OCI-LY7 (cell line): ENCODE measurements at regions of chr11 and their contacts with region 1.

Region 1: DNA sequence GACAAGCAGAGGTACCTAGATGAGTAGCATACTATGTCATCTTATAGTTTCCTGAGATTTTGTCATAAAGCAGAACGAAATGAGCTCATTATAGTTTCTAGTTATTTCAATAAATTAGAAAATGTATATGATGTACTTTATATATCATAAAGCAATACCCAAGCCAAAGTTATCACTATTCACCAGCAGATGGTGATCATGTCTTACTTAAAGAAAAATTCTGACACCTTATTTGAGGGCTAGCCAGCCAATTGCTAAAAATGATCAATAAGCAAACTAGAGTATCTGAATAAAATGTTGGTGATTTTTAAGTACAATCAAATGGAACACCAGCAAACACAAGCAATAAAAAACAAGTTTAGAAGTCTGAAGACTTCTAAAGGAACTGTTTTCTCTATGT is 44.1 kb downstream of the RSF1 start:
- DNase-seq: peak; percentile 32
- H3K4me3 ChIP-seq: no peak overlapping the region
- H3K27ac ChIP-seq: no peak overlapping the region
- H3K4me1 ChIP-seq: no peaks in the 10 kb centered on the region
- CTCF ChIP-seq: peak; percentile 78

Region 2: DNA sequence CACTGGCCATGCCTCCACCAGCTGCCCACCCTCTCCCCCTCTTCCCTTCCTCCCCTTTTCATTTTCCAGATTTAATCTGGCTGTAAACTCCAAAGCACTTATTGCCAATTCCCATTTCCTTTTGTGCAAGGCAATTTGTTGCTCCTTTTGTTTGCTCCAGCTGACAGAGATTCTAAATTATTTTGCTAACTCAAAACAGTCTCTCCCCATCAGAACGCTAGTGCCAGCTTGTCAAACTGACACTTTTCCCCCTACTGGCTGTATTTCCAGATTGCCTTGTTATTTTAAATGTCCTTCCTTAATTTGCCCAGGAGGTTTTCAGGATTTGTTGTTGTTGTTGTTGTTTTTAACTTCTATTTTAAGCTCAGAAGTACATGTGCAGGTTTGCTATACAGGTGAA is 245.6 kb before region 1 on chr11:
- CTCF ChIA-PET with region 1: no interaction called
- POLR2A ChIA-PET with region 1: no interaction called
- intact Hi-C with region 1: no loop called
- DNase-seq: no peak
- H3K4me3 ChIP-seq: no peak overlapping the region
- H3K27ac ChIP-seq: no peak overlapping the region
- H3K4me1 ChIP-seq: peaks cover 2% of the 10 kb centered on the region
- CTCF ChIP-seq: no peak

Region 3: GRCh38 chr11:77820563-77821348 is 44.3 kb after region 1 on chr11 and contains the starts of genes AAMDC and RSF1:
- CTCF ChIA-PET with region 1: no interaction called
- POLR2A ChIA-PET with region 1: no interaction called
- intact Hi-C with region 1: loop called (anchors 2 kb)
- DNase-seq: peak; percentile 96
- H3K4me3 ChIP-seq: peak within 1 kb of the TSS; percentile 97
- H3K27ac ChIP-seq: peak within 1 kb of the TSS; percentile 85
- H3K4me1 ChIP-seq: peaks cover 13% of the 10 kb centered on the region
- CTCF ChIP-seq: peak; percentile 73
- total RNA-seq, gene AAMDC: 11.0 and 16.2 TPM in 2 replicates
- total RNA-seq, gene RSF1: 33.5 and 56.9 TPM in 2 replicates

Region 4: GRCh38 chr11:77865805-77866204 is 89.3 kb after region 1 on chr11:
- CTCF ChIA-PET with region 1: no interaction called
- POLR2A ChIA-PET with region 1: no interaction called
- intact Hi-C with region 1: no loop called
- DNase-seq: no peak
- H3K4me3 ChIP-seq: no peak overlapping the region
- H3K27ac ChIP-seq: no peak overlapping the region
- H3K4me1 ChIP-seq: no peaks in the 10 kb centered on the region
- CTCF ChIP-seq: no peak

Region 5: GRCh38 chr11:78000193-78000592 is 223.7 kb after region 1 on chr11:
- CTCF ChIA-PET with region 1: no interaction called
- POLR2A ChIA-PET with region 1: interaction called, 3 read pairs
- intact Hi-C with region 1: loop called (anchors 2 kb)
- DNase-seq: peak; percentile 83
- H3K4me3 ChIP-seq: no peak overlapping the region
- H3K27ac ChIP-seq: peak overlapping the region; percentile 91
- H3K4me1 ChIP-seq: peaks cover 32% of the 10 kb centered on the region
- CTCF ChIP-seq: peak; percentile 88

Region 6: DNA sequence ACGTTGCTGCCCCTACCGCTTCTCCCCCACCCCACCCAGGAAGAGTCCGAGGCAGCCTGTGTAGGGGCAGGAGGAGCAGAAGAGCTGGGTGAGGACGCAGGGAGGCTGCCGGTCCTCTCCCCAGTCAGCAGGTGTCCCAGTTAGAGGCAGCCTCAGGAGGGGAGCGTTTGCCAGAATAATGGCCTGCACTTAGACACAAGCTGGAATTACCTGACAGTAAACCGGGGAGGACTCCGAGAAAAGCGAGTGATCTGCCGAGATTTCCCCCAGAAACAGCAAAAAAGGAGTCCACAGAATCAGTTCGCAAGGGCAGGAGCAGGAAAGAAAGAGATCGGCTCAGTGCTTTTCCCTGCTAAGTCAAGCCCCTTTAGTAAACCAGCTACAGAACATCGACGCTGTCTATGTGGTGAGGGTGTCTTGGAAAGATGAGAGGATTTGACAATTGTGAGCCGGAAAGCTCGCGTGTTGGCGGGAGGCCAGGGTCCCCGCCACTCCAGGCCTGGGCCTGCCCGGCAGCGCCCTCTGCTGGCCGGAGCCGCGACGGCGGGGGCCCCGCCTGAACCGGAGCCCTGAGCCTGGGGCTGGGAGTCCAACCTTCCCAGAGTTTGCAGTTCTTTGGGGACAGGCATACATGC is 269.5 kb after region 1 on chr11:
- CTCF ChIA-PET with region 1: no interaction called
- POLR2A ChIA-PET with region 1: no interaction called
- intact Hi-C with region 1: loop called (anchors 5 kb)
- DNase-seq: peak; percentile 68
- H3K4me3 ChIP-seq: no peak overlapping the region
- H3K27ac ChIP-seq: no peak overlapping the region
- H3K4me1 ChIP-seq: peaks cover 3% of the 10 kb centered on the region
- CTCF ChIP-seq: peak; percentile 99